Astrocyte of the cerebellum (primary cell): ENCODE measurements at regions of chr3 and their contacts with region 1.

Region 1: DNA sequence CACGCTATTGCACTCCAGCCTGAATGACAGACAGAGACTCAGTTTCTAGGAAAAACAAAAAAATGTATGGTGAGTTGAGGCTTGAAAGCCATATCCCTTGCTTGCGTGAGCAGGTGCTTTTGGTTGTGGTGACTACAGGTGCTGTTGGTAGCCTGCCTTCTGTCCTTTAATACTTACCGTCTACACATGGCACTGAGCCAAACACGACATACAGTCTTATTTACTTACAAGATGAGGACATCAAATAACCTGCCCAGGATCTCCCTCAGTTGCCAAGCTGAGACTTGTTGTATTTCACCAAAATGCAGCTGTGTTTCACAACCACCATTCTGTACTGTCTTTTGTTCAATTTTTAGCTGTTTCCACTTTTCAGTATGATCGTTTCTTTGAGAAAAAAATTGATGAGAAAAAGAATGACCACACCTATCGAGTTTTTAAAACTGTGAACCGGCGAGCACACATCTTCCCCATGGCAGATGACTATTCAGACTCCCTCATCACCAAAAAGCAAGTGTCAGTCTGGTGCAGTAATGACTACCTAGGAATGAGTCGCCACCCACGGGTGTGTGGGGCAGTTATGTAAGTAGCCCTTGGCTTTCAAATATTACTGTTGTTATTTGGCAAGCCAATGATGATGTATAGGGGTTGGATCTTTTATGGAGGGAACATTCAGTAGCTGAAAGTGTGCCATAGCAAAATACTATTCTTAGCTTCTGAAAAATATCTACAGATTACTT is 6.5 kb downstream of the ALAS1 start:
- DNase-seq: no peak
- H3K4me3 ChIP-seq: no peak overlapping the region
- CTCF ChIP-seq: no peak

Region 2: GRCh38 chr3:52154117-52155094 is 50.1 kb before region 1 on chr3 and contains the start of gene POC1A:
- in situ Hi-C with region 1: loop called (anchors 5 kb)
- DNase-seq: peak; percentile 90
- H3K4me3 ChIP-seq: peak within 1 kb of the TSS; percentile 78
- CTCF ChIP-seq: no peak

Region 3: GRCh38 chr3:52352566-52352965 is 148.1 kb after region 1 on chr3:
- in situ Hi-C with region 1: no loop called
- DNase-seq: no peak
- H3K4me3 ChIP-seq: no peak overlapping the region
- CTCF ChIP-seq: no peak